CD8-positive, alpha-beta T cell (primary cell): ENCODE measurements at regions of chr4 and their contacts with region 1.

Region 1: DNA sequence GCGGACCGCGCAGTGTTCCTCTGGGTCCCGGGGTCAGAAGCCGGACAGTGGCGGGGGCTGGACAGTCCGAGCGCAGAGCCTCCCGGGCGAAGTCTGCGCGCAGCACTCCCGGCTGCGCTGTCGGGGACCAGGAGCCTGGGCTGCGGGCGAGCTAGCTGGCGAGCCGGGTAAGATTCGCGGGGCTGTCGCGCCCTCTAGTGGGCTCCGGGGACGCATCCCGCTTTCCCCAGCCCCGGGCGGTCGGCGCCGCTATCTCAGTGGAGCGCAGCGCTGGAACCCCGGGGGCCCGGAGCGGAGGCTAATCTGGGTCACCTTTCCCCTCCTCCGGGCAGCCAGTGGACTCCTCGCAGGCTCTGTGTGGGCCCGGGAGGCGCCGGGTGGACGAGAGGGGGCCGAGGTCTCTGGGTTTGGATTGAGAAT is 4.2 kb downstream of the PDGFRA start:
- DNase-seq: peak; percentile 42 to 81 (median 71)
- ATAC-seq: peak; percentile 78
- H3K4me3 ChIP-seq: peak overlapping the region; percentile 42 to 47
- H3K4me3 Mint-ChIP-seq: peak overlapping the region; percentile 86
- H3K27ac ChIP-seq: no peak overlapping the region
- H3K27ac Mint-ChIP-seq: no peak overlapping the region
- H3K4me1 ChIP-seq: peaks cover 36% of the 10 kb centered on the region
- H3K4me1 Mint-ChIP-seq: peaks cover 23% of the 10 kb centered on the region
- H3K27me3 ChIP-seq: peaks cover 18 to 28% of the 10 kb centered on the region in 2 experiments
- H3K27me3 Mint-ChIP-seq: peaks cover 57% of the 10 kb centered on the region
- CTCF ChIP-seq: peak; percentile 67

Region 2: DNA sequence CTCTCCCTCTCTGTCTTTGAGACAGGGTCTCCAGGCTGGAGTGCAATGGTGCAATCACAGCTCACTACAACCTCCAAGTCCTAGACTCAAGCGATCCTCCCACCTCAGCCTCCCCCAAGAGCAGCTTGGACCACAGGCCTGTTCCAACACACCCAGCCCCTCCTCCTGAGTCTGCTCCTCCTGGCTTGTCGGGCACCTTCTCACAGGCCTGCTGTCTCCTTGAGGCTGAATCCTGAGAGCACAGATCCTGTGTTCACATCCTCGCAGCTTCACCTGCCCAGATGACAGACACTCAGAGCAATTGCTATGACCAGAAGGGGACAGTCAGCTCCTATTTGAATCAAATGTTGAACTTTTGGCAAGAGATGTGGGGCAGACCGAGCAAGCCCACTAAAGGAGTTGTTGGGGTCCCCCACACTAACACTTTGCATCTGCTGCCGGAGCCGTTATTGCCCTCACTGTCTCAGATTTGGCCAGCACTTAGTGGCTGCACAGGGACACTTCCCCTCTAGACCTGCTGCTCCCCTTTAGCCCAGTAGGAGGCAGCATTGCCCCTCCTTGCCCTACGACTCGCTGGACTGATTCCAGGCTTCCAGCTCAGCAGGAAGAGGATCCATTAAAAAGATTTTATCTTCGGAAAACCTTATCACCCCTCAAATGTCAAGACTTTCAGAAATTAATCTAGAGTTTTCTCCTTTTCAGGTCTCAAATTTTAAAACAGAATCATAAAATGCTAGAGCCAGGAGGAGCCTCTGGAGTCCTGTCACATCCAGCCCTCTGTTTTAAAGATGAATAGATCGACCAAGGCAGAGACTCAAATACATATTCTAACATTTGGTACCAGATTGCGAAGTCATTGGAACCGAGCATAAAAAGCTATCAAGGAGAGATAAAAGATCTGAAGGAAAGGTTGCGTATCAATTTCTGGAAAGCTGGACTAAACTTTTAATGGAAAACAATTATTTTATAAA is 1687.9 kb before region 1 on chr4:
- CTCF ChIA-PET with region 1: interaction called, 4 read pairs
- POLR2A ChIA-PET with region 1: no interaction called
- intact Hi-C with region 1: loop called (anchors 5 kb)
- DNase-seq: peak; percentile 23 to 64 (median 55)
- ATAC-seq: peak; percentile 38
- H3K4me3 ChIP-seq: no peak overlapping the region
- H3K4me3 Mint-ChIP-seq: no peak overlapping the region
- H3K27ac ChIP-seq: no peak overlapping the region
- H3K27ac Mint-ChIP-seq: no peak overlapping the region
- H3K4me1 ChIP-seq: no peaks in the 10 kb centered on the region
- H3K4me1 Mint-ChIP-seq: no peaks in the 10 kb centered on the region
- H3K27me3 ChIP-seq: peaks cover 0 to 3% of the 10 kb centered on the region in 2 experiments
- H3K27me3 Mint-ChIP-seq: peaks cover 16% of the 10 kb centered on the region
- CTCF ChIP-seq: peak; percentile 62

Region 3: DNA sequence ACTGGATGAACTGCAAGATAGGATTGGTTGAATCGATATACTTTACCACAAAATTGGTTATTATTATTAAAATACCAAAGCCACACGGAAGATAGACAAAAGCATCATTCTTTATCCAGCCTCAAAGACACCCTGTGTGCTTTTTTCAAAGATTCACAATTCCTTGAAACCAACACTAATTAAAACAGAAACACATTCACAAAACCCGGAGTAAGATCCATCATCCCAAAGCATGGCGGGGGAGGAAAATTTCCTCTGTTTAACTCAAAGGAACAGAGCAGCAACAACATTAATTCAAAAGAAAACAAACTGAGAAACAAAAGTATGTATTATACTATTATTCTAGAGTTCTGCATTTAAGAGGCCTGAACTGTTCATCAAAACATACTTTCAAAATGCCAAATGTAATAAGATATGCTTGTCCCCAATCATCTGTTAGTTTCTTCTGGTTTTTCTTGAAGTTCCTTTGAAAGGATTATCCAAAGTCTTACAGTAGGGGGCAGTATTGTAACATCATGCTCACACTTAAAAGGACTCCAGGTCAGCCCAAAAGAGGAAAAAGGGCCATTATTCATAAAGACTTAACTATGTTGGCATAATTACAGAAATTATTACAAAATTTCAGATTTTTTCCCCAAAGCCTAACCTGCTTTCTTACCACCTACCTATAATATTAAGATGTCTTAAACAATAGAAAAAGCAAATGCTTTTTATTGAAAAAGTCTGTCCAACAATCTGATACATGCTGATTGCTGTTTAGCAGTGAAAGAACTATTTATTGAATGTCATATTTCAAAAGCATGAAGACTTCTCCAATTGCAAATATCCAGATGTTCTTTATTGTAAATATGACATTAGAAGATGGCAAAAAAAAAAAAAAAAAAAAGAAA is 1036.2 kb before region 1 on chr4:
- CTCF ChIA-PET with region 1: interaction called, 49 read pairs
- POLR2A ChIA-PET with region 1: no interaction called
- intact Hi-C with region 1: loop called (anchors 1 kb)
- DNase-seq: peak in 2 of 9 experiments; percentile 62 to 69
- ATAC-seq: no peak
- H3K4me3 ChIP-seq: no peak overlapping the region
- H3K4me3 Mint-ChIP-seq: no peak overlapping the region
- H3K27ac ChIP-seq: no peak overlapping the region
- H3K27ac Mint-ChIP-seq: no peak overlapping the region
- H3K4me1 ChIP-seq: no peaks in the 10 kb centered on the region
- H3K4me1 Mint-ChIP-seq: no peaks in the 10 kb centered on the region
- H3K27me3 ChIP-seq: no peaks in the 10 kb centered on the region
- H3K27me3 Mint-ChIP-seq: no peaks in the 10 kb centered on the region
- CTCF ChIP-seq: peak; percentile 79

Region 4: DNA sequence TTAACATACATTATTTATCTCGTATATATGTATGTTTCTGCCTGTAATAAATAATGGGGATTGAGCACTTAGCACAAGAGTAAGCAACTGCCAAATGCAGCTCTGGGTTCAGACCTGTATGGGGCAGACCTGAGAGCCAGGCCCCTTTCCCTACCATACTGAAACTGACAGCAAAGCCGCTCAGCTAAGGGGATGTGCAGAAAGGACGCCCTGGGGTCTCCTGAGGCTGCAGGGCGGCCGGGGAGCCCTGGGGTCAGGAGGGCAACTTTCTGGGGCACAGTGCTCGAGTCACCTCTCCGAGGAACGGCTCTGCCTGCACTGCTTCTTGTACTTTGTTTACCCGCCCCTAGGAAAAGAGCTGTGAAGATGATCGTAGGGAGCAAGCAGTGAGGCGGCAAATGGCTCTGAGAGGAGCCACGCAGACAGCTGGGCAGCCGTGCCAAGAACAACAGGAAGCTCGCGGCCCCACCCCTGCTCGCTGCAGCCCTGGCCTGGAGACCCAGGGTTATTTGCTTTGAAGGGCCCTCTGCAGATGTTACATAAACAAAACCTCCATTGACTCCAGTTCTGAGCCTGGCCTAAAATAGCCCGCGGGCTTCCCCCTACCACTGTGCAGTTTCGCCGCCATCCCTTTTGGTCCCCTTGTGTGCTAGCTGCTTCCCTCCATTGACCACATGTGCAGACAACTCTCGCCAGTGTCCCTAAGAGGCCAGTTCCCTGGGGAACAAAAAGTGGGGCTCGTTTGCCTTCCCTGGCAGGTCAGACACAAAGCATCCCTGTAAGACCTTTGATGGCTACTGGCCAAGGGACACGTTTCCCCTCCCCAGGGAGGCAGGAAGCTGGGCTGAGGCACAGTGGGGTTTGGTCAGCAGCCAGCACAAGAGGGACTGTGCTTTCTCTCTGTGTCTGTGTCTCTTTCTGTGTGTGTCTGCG is 530.7 kb before region 1 on chr4:
- CTCF ChIA-PET with region 1: interaction called, 18 read pairs
- POLR2A ChIA-PET with region 1: no interaction called
- intact Hi-C with region 1: no loop called
- DNase-seq: peak in 3 of 9 experiments; percentile 3 to 48 (median 5)
- ATAC-seq: no peak
- H3K4me3 ChIP-seq: no peak overlapping the region
- H3K4me3 Mint-ChIP-seq: peak overlapping the region; percentile 65
- H3K27ac ChIP-seq: no peak overlapping the region
- H3K27ac Mint-ChIP-seq: no peak overlapping the region
- H3K4me1 ChIP-seq: no peaks in the 10 kb centered on the region
- H3K4me1 Mint-ChIP-seq: peaks cover 12% of the 10 kb centered on the region
- H3K27me3 ChIP-seq: no peaks in the 10 kb centered on the region
- H3K27me3 Mint-ChIP-seq: peaks cover 20% of the 10 kb centered on the region
- CTCF ChIP-seq: no peak

Region 5: DNA sequence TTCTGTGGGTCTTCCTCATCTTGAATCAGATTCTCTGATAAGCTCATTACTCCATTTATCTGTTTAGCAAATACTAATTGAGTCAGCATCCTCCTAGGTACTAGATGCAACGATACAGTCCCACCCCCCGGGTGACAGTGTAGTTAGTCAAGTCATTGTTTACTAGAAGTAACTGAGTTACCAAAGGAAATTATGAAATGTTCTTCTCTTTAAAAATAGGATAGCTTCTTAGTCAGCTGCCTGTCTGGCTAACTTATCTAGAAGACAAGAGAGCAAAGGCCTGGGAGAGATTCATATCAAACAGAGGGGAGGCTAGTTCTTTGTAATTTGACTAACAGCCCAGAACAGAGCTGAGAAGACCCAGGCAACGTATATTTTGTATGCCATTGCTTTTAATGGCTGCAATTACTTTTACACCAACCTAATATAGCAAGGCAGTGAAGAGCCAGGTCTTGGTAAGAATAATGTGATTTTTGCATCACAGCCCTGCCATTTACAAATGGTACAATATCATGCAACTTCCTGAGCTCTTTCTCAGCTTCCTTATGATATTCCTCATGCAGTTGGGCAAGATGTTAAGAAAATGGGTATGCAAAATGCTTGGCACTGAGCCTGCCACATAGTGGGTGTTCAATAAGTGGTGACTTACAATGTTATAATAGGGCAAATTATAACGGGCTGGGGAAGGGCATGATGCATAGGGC is 318.8 kb before region 1 on chr4:
- CTCF ChIA-PET with region 1: interaction called, 45 read pairs
- POLR2A ChIA-PET with region 1: no interaction called
- intact Hi-C with region 1: no loop called
- DNase-seq: peak in 1 of 9 experiments; percentile 12
- ATAC-seq: no peak
- H3K4me3 ChIP-seq: no peak overlapping the region
- H3K4me3 Mint-ChIP-seq: no peak overlapping the region
- H3K27ac ChIP-seq: no peak overlapping the region
- H3K27ac Mint-ChIP-seq: no peak overlapping the region
- H3K4me1 ChIP-seq: no peaks in the 10 kb centered on the region
- H3K4me1 Mint-ChIP-seq: no peaks in the 10 kb centered on the region
- H3K27me3 ChIP-seq: no peaks in the 10 kb centered on the region
- H3K27me3 Mint-ChIP-seq: peaks cover 15% of the 10 kb centered on the region
- CTCF ChIP-seq: no peak

Region 6: GRCh38 chr4:53929955-53930798 is 303.1 kb before region 1 on chr4:
- CTCF ChIA-PET with region 1: interaction called, 141 read pairs
- POLR2A ChIA-PET with region 1: interaction called, 5 read pairs
- intact Hi-C with region 1: loop called (anchors 1 kb)
- DNase-seq: peak; percentile 26 to 75 (median 60)
- ATAC-seq: peak; percentile 55
- H3K4me3 ChIP-seq: no peak overlapping the region
- H3K4me3 Mint-ChIP-seq: no peak overlapping the region
- H3K27ac ChIP-seq: no peak overlapping the region
- H3K27ac Mint-ChIP-seq: no peak overlapping the region
- H3K4me1 ChIP-seq: no peaks in the 10 kb centered on the region
- H3K4me1 Mint-ChIP-seq: no peaks in the 10 kb centered on the region
- H3K27me3 ChIP-seq: peaks cover 0 to 4% of the 10 kb centered on the region in 2 experiments
- H3K27me3 Mint-ChIP-seq: peaks cover 10% of the 10 kb centered on the region
- CTCF ChIP-seq: peak; percentile 75

Region 7: DNA sequence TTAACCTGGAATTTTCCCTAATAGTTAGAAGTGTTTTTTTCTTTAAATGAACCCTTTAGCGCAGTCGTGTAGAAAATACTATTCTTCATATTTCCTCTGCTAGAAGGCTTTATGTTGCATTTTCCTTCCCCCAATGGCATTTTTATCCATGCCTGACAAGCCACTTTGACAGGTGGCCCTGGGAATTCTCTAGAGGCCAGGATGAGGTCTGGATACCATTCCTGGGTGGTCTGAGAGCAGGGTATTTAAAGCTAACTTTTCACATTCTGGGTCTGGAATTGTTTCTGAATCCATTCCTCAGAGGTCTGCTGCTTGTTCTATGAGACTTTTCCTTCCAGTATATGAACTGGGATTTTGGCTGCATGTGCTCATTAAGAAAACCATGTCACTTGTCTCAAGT is 35.4 kb before region 1 on chr4:
- CTCF ChIA-PET with region 1: no interaction called
- POLR2A ChIA-PET with region 1: no interaction called
- intact Hi-C with region 1: no loop called
- DNase-seq: no peak
- ATAC-seq: no peak
- H3K4me3 ChIP-seq: no peak overlapping the region
- H3K4me3 Mint-ChIP-seq: no peak overlapping the region
- H3K27ac ChIP-seq: no peak overlapping the region
- H3K27ac Mint-ChIP-seq: no peak overlapping the region
- H3K4me1 ChIP-seq: no peaks in the 10 kb centered on the region
- H3K4me1 Mint-ChIP-seq: no peaks in the 10 kb centered on the region
- H3K27me3 ChIP-seq: peaks cover 0 to 6% of the 10 kb centered on the region in 2 experiments
- H3K27me3 Mint-ChIP-seq: peaks cover 3% of the 10 kb centered on the region
- CTCF ChIP-seq: no peak

Region 8: DNA sequence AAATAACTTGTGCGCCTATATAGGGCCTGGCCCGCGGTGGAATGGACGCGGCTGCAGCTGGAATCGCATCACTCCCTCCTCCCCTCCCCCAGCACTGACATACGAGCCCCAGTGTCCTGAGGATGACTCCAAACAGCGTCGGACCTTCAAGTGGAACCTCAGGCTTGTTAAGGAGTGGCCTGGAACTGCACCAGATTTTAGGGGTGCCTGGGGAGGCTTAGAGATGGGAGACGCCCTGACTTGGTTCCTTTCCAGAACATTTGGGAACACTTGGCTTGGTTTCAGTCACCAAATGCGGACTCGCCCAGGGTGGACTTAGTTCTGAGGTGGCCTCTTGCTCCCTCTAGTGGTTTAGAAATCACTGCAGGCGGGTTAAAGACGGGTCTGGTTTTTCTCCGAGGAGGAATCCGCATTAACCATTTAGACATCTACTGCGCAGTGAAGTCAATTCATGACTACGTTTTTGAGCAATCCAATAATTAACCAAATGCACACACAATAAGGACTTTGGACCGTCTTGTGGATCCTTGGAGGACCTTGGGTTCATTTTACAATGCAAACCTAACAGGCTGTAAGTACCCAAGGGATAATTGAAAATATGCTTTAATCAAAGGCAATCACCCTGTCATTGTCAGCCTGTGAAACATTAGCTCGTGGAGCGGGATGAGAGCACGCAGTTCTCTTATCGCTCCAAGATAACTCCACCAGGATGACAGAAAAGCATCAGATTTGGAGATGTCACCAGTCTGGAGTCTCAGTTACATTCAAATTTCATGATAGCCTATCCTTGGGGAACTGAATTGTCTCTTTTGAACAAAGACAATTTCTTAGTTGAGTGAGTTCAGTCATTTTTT is 15.4 kb before region 1 on chr4:
- CTCF ChIA-PET with region 1: interaction called, 38 read pairs
- POLR2A ChIA-PET with region 1: no interaction called
- intact Hi-C with region 1: loop called in 1 of 2 experiments (anchors 1 kb)
- DNase-seq: peak; percentile 23 to 75 (median 60)
- ATAC-seq: peak; percentile 66
- H3K4me3 ChIP-seq: no peak overlapping the region
- H3K4me3 Mint-ChIP-seq: peak overlapping the region; percentile 39
- H3K27ac ChIP-seq: no peak overlapping the region
- H3K27ac Mint-ChIP-seq: no peak overlapping the region
- H3K4me1 ChIP-seq: peaks cover 5% of the 10 kb centered on the region
- H3K4me1 Mint-ChIP-seq: peaks cover 4% of the 10 kb centered on the region
- H3K27me3 ChIP-seq: peaks cover 3 to 5% of the 10 kb centered on the region in 2 experiments
- H3K27me3 Mint-ChIP-seq: peaks cover 35% of the 10 kb centered on the region
- CTCF ChIP-seq: peak; percentile 87

Region 9: DNA sequence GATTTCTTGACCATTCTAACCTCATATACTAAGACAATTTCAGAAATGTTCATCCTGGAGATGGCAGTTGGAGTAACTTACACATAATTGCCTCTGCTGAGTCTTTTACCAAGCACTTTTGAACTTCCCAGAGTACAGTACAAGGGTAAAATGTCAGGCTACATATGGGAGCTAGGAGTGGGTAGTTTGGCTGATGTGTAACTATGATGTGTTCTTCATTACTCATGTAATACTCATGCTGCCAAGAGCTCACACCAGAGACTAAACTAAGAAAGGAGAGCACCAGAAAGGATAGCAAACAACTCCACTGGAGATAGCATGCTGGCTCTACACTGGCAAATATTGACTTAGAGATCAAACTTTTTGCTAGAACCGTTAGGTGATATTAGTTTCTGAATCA is 189.8 kb after region 1 on chr4:
- CTCF ChIA-PET with region 1: no interaction called
- POLR2A ChIA-PET with region 1: no interaction called
- intact Hi-C with region 1: no loop called
- DNase-seq: no peak
- ATAC-seq: no peak
- H3K4me3 ChIP-seq: no peak overlapping the region
- H3K4me3 Mint-ChIP-seq: no peak overlapping the region
- H3K27ac ChIP-seq: no peak overlapping the region
- H3K27ac Mint-ChIP-seq: no peak overlapping the region
- H3K4me1 ChIP-seq: no peaks in the 10 kb centered on the region
- H3K4me1 Mint-ChIP-seq: no peaks in the 10 kb centered on the region
- H3K27me3 ChIP-seq: no peaks in the 10 kb centered on the region
- H3K27me3 Mint-ChIP-seq: peaks cover 8% of the 10 kb centered on the region
- CTCF ChIP-seq: no peak